Caco-2 (cell line): ENCODE measurements at regions of chr19 and their contacts with region 1.

Region 1: GRCh38 chr19:9584073-9584833 is at the start of gene ZNF121:
- DNase-seq: peak; percentile 81 to 85
- H3K4me3 ChIP-seq: peak within 1 kb of the TSS; percentile 74
- H3K4me3 Mint-ChIP-seq: peak within 1 kb of the TSS; percentile 90
- H3K27ac Mint-ChIP-seq: peak within 1 kb of the TSS; percentile 98
- H3K4me1 ChIP-seq: no peaks in the 10 kb centered on the region
- H3K4me1 Mint-ChIP-seq: peaks cover 7% of the 10 kb centered on the region
- H3K27me3 ChIP-seq: no peaks in the 10 kb centered on the region
- H3K27me3 Mint-ChIP-seq: no peaks in the 10 kb centered on the region
- CTCF ChIP-seq: no peak
- total RNA-seq, gene ZNF121: 35.5 and 38.4 TPM in 2 replicates

Region 2: DNA sequence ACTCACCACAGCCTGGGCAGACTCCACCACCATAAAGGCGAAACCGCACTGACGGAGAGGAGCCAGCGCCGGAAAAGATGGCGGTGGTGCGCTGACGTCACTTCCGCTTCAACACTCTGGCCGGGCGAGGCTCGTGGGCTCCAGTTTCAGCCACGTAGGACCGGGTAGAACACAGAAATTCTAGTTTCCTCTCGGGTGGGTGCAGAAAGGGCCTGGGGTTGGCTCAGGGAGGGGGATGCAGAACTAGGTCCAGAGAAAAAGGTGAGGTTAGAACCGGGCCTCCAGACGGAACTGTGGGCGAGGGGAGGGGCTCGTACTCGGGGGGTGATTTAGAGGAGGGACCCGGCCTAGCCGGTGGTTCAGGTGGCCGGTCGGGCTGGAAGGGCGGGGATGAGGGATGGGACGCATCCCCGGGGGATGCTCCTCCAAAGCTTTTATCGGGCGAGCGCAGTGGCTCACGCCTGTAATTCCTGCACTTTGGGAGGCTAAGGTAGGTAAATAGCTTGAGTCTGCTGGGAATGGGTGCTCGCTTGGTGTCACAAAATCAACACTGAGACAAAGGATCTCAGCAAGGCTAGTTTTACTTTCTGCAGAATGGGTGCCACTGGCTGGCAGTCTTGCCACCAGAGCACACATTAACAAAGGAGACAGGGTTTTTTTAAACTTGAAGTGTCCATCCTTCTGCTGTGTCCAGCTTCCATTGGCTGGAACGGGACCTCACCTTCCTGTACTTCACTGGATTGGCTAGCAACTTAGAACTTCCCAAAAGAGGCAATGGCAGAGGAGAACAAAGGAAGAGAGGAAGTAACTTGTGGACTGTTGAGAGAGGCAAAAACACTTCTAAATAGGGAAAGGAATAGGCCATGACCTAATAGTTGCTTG is 37.1 kb after region 1 on chr19 and contains the start of gene ZNF561:
- CTCF ChIA-PET with region 1: no interaction called
- POLR2A ChIA-PET with region 1: no interaction called
- intact Hi-C with region 1: loop called (anchors 1 kb)
- DNase-seq: peak; percentile 80 to 84
- H3K4me3 ChIP-seq: peak within 1 kb of the TSS; percentile 71
- H3K4me3 Mint-ChIP-seq: peak within 1 kb of the TSS; percentile 96
- H3K27ac Mint-ChIP-seq: peak within 1 kb of the TSS; percentile 100
- H3K4me1 ChIP-seq: no peaks in the 10 kb centered on the region
- H3K4me1 Mint-ChIP-seq: peaks cover 7% of the 10 kb centered on the region
- H3K27me3 ChIP-seq: no peaks in the 10 kb centered on the region
- H3K27me3 Mint-ChIP-seq: no peaks in the 10 kb centered on the region
- CTCF ChIP-seq: no peak
- total RNA-seq, gene ZNF561: 23.7 and 27.4 TPM in 2 replicates

Region 3: DNA sequence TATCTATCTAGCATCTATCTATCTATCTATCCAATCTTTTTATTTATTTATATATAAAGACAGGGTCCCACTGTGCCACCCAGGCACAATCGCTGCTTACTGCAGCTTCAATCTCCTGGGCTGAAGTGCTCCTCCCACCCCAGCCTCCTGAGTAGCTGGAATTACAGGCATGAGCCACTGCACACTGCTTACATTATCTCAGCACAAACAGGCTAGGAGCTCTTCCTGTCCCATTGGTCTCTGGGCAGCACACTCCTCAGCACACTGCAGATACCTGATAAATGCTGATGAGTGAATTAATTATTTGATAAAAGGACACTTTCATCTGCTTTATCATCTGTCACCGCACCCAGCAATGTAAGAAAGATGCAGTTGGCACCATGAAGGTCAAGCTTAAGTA is 74.5 kb after region 1 on chr19:
- CTCF ChIA-PET with region 1: no interaction called
- POLR2A ChIA-PET with region 1: no interaction called
- intact Hi-C with region 1: no loop called
- DNase-seq: no peak
- H3K4me3 ChIP-seq: no peak overlapping the region
- H3K4me3 Mint-ChIP-seq: no peak overlapping the region
- H3K27ac Mint-ChIP-seq: no peak overlapping the region
- H3K4me1 ChIP-seq: no peaks in the 10 kb centered on the region
- H3K4me1 Mint-ChIP-seq: no peaks in the 10 kb centered on the region
- H3K27me3 ChIP-seq: no peaks in the 10 kb centered on the region
- H3K27me3 Mint-ChIP-seq: no peaks in the 10 kb centered on the region
- CTCF ChIP-seq: no peak

Region 4: DNA sequence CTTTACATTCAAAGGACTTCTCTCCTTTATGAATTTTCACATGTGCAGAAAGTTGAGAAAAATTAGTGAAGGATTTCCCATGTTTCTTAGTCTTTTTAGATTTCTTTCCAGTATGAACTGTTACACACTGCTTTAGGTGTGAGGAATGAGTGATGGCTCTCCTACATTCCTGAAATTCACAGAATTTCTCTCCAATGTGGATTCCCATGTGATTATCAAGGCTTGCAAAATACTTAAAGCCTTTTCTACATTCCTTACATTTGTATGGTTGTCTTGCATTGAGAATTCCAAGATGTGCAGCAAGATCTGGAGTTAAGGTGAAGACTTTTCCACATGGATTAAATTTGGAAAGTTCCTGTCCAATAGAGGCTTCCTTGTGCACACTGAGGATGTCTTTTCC is 106.5 kb after region 1 on chr19:
- CTCF ChIA-PET with region 1: no interaction called
- POLR2A ChIA-PET with region 1: no interaction called
- intact Hi-C with region 1: no loop called
- DNase-seq: no peak
- H3K4me3 ChIP-seq: no peak overlapping the region
- H3K4me3 Mint-ChIP-seq: no peak overlapping the region
- H3K27ac Mint-ChIP-seq: no peak overlapping the region
- H3K4me1 ChIP-seq: peaks cover 4% of the 10 kb centered on the region; the same call in 1 of the 2 replicates
- H3K4me1 Mint-ChIP-seq: no peaks in the 10 kb centered on the region
- H3K27me3 ChIP-seq: no peaks in the 10 kb centered on the region
- H3K27me3 Mint-ChIP-seq: no peaks in the 10 kb centered on the region
- CTCF ChIP-seq: no peak